ENCODE measurements at regions of chr19 and their contacts with region 1.

Region 1: GRCh38 chr19:17470068-17470841 is at the start of gene SLC27A1:
- DNase-seq: peak; percentile 87 to 93
- ATAC-seq: peak; percentile 72 to 84 (median 77)
- H3K4me3 ChIP-seq: peak within 1 kb of the TSS; percentile 94
- H3K4me3 Mint-ChIP-seq: peak within 1 kb of the TSS; percentile 98
- H3K27ac ChIP-seq: peak within 1 kb of the TSS; percentile 84
- H3K27ac Mint-ChIP-seq: peak within 1 kb of the TSS; percentile 90 to 96
- H3K4me1 ChIP-seq: peaks cover 44% of the 10 kb centered on the region
- H3K4me1 Mint-ChIP-seq: peaks cover 32 to 54% of the 10 kb centered on the region in 2 donors
- H3K27me3 ChIP-seq: no peaks in the 10 kb centered on the region
- H3K27me3 Mint-ChIP-seq: no peaks in the 10 kb centered on the region
- CTCF ChIP-seq: no peak
- total RNA-seq, gene SLC27A1: 12.9 to 26.2 (median 16.3) TPM

Region 2: GRCh38 chr19:17346109-17346671 is 124.1 kb before region 1 on chr19:
- intact Hi-C with region 1: loop called (anchors 1 kb)
- DNase-seq: peak; percentile 75 to 87
- ATAC-seq: peak; percentile 87 to 99 (median 99)
- H3K4me3 ChIP-seq: no peak overlapping the region
- H3K4me3 Mint-ChIP-seq: no peak overlapping the region
- H3K27ac ChIP-seq: no peak overlapping the region
- H3K27ac Mint-ChIP-seq: no peak overlapping the region
- H3K4me1 ChIP-seq: peaks cover 6% of the 10 kb centered on the region
- H3K4me1 Mint-ChIP-seq: peaks cover 0 to 6% of the 10 kb centered on the region in 2 donors
- H3K27me3 ChIP-seq: peaks cover 2% of the 10 kb centered on the region
- H3K27me3 Mint-ChIP-seq: peaks cover 7 to 16% of the 10 kb centered on the region in 2 donors
- CTCF ChIP-seq: peak; percentile 98

Region 3: GRCh38 chr19:17488593-17489391 is 18.5 kb after region 1 on chr19:
- intact Hi-C with region 1: loop called (anchors 2 kb)
- DNase-seq: peak; percentile 69 to 86
- ATAC-seq: peak; percentile 86 to 91 (median 87)
- H3K4me3 ChIP-seq: peak overlapping the region; percentile 35
- H3K4me3 Mint-ChIP-seq: peak overlapping the region; percentile 89
- H3K27ac ChIP-seq: peak overlapping the region; percentile 71
- H3K27ac Mint-ChIP-seq: peak overlapping the region; percentile 92 to 94
- H3K4me1 ChIP-seq: peaks cover 42% of the 10 kb centered on the region
- H3K4me1 Mint-ChIP-seq: peaks cover 21 to 39% of the 10 kb centered on the region in 2 donors
- H3K27me3 ChIP-seq: no peaks in the 10 kb centered on the region
- H3K27me3 Mint-ChIP-seq: no peaks in the 10 kb centered on the region
- CTCF ChIP-seq: no peak

Measured in natural killer cell (primary cell).